Vagina (tissue), 2 donors: ENCODE measurements at regions of chr9 and their contacts with region 1.

Region 1: DNA sequence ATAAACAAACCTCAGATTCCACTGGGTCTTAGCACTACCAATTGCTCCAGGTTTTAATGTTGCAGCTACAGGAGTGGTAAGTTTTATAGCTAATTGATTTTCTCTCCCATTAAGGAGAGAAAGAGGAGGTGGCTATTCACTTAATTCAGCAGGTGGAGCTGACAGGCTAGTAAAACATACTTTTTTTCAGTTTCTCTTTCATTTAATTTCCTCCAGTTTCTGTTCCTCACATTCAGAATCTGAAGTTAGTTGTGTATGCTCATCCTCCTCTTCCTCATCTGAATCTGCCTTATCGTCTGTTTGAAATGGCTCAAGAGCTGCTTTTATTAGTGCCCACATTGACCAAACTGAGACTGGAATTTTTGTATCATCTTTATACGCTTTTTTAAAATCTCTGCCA is 98.0 kb downstream of the PLPPR1 start:
- DNase-seq: no peak
- H3K4me3 ChIP-seq: no peak overlapping the region
- H3K27ac ChIP-seq: no peak overlapping the region
- H3K4me1 ChIP-seq: no peaks in the 10 kb centered on the region
- H3K27me3 ChIP-seq: no peaks in the 10 kb centered on the region
- CTCF ChIP-seq: no peak
- POLR2A ChIP-seq: no peak

Region 2: DNA sequence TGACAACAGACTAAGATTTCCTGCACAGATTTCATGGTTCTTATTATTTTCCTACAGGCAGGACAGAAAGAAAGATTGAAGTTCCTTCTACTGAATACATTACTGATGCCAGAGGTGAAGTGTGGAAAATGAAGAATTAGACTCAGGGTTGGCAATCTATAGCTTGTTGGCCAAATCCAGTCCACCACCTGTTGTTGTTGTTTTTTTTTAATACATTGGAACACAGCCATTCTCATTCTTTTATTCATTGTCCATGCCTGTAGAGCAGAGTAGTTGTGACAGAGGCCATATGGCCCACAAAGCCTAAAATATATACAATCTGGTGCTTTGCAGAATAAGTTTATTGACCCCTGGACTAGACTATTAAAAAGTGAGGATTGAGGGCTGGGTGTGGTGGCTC is 103.9 kb before region 1 on chr9:
- intact Hi-C with region 1: loop called (anchors 5 kb)
- DNase-seq: no peak
- H3K4me3 ChIP-seq: no peak overlapping the region
- H3K27ac ChIP-seq: no peak overlapping the region
- H3K4me1 ChIP-seq: no peaks in the 10 kb centered on the region
- H3K27me3 ChIP-seq: no peaks in the 10 kb centered on the region
- CTCF ChIP-seq: no peak
- POLR2A ChIP-seq: no peak

Region 3: DNA sequence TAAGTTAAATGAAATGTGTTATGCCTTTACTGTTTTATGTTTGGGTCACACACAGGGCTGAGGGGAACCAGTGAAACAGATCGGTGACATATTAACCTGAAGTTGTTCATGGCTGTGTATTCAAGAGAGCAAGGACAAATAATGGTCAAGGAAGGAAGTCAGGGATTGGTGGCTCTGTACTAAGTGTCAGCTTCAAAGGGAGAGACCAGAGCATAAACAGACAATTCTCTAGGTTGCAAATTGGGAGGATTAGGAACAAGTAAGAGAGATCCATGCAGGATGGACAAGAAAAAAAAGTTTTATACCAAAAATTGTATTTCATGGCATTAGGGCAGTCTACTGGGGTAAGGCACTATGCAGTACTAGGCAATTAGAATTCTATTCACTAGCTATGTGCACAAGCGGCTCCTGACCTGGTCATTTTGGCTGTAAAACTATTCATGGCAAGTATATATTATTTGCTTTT is 58.3 kb after region 1 on chr9:
- intact Hi-C with region 1: no loop called
- DNase-seq: no peak
- H3K4me3 ChIP-seq: no peak overlapping the region
- H3K27ac ChIP-seq: no peak overlapping the region
- H3K4me1 ChIP-seq: no peaks in the 10 kb centered on the region
- H3K27me3 ChIP-seq: no peaks in the 10 kb centered on the region
- CTCF ChIP-seq: no peak
- POLR2A ChIP-seq: no peak

Region 4: DNA sequence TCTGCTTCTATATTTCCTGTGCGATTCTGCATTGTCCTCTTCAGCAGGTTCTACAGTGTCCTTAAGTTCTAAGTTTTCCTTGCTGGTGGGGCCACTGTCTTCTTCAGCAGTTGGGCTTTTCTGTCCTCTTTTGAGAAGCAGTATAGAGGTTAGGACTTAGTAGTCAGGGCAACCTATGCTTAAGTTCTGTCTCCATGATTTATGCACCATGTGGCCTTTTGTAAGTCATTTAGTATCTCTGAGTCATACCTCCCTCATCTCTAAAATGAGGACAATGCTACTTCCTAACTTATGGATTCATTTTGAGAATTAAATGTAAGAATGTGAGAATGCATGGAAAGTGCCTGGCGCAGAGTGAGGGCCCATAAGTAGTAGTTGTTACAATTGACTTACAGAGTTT is 565.1 kb after region 1 on chr9:
- intact Hi-C with region 1: loop called (anchors 5 kb)
- DNase-seq: no peak
- H3K4me3 ChIP-seq: no peak overlapping the region
- H3K27ac ChIP-seq: no peak overlapping the region
- H3K4me1 ChIP-seq: no peaks in the 10 kb centered on the region
- H3K27me3 ChIP-seq: no peaks in the 10 kb centered on the region
- CTCF ChIP-seq: no peak
- POLR2A ChIP-seq: no peak